GM10248 (cell line): ENCODE measurements at regions of chr12 and their contacts with region 1.

Region 1: DNA sequence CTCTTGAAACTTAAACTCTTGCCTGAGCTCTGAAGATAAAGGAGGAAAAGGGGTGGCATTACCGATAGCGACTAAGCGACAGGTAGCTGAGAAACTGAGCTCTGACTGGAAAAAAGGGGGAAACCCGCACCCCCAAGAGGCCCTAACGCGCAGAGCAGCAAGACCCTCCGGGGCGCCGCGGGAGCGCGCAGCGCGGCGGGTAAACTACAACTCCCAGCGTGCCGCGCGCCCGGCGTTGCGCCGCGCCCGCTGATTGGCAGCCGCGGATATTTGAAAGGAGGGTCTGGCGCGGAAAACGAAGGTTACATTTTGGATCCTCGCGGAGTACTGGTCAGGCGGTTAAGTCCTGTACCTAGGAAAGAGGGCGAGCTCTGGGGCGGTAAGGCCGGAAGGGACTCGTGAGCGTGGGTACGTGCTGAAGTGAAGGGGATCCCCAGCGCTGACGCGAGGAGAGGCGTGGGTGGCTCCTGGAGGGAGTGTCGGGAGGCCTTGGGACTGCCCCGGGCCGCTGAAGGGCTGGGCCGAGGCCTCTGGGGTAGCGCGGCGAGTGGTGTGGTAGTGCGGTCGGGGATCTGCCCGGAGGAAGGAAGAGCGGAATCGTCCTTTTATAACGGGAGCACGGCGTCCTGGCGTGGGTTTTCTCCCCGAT is at the start of gene ESPL1:
- DNase-seq: peak; percentile 92
- CTCF ChIP-seq: peak; percentile 39

Region 2: GRCh38 chr12:53251477-53252348 is 16.4 kb before region 1 on chr12:
- CTCF ChIA-PET with region 1: interaction called, 69 read pairs
- POLR2A ChIA-PET with region 1: interaction called, 6 read pairs
- DNase-seq: peak; percentile 93
- CTCF ChIP-seq: peak; percentile 67

Region 3: DNA sequence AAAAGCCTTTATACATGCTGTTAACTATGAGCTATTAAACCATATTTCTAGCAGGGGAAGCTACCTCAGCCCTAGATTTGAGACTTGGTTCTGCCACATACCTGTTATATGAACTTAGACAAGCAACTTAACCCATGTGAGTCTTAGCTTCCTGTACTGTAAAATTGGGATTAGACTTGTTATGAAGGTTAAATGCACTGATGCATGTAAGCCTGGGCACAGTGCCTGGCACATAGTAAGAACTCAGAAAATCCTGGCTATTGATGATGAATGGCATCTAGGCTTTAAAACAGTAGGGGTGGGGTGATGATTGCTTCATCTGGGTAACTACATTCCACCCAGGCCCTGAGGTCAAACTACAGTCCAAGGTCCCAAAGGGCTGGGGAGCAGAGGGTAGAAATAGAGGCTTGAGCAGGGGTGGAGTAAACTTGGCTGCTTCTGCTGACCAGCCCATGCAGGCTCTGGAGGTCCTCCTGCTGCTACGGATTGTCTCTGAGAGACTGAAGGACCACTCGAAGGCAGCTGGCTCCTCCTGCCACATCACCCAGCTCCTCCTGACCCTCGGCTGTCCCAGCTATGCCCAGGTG is 11.3 kb after region 1 on chr12:
- CTCF ChIA-PET with region 1: interaction called, 31 read pairs
- POLR2A ChIA-PET with region 1: no interaction called
- DNase-seq: no peak
- CTCF ChIP-seq: no peak

Region 4: DNA sequence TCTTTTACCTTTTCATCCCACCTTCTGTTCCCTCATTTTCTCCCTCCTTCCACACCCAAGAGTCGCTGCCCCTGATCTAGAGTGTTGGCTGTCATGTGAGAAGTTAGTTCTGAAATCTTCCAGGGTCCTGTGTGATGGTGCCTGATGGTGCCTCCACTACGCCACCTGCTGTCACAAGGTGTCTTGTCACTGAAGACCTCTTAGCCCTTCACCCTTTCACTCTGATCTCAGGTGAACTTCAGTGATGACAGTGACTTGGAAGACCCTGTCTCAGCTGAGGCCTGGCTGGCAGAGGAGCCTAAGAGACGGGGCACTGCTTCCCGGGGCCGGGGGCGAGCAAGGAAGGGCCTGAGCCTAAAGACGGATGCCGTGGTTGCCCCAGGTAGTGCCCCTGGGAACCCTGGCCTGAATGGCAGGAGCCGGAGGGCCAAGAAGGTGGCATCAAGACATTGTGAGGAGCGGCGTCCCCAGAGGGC is 19.7 kb after region 1 on chr12:
- CTCF ChIA-PET with region 1: interaction called, 69 read pairs
- POLR2A ChIA-PET with region 1: no interaction called
- DNase-seq: peak; percentile 80
- CTCF ChIP-seq: peak; percentile 68

Region 5: GRCh38 chr12:53295070-53295890 is 27.2 kb after region 1 on chr12 and contains the start of gene PFDN5:
- CTCF ChIA-PET with region 1: interaction called, 69 read pairs
- POLR2A ChIA-PET with region 1: interaction called, 3 read pairs
- DNase-seq: peak; percentile 92
- CTCF ChIP-seq: no peak